Activated CD4-positive, alpha-beta memory T cell treated with anti-CD3 and anti-CD28 coated beads, Interleukin-2, amount 10 ng/mL, durations not matched to agents 7 days and 5 days (primary cell): ENCODE measurements at regions of chr1 and their contacts with region 1.

Region 1: DNA sequence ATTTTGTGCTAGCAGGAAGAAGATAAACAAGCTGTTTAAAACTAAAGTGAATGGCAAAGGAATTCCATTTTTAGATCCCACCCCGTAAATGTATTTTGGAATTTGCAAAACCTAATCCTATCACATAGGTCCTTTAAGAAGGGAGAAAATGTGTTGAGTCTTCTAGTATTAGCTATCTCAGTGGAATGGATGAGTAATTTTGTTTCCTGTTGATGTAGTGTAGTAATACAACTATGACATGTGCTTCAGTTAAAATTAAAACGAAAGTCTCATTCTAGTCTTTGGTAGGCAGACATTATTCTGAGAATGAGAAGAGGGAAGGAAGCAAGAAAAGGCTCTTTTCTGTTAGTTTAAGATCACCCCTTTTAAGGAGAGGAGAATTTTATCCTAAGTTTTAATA is 265.9 kb upstream of the C1orf105 start:
- DNase-seq: no peak
- H3K4me3 Mint-ChIP-seq: peak overlapping the region; percentile 19
- H3K27ac Mint-ChIP-seq: peak overlapping the region; percentile 71
- H3K4me1 Mint-ChIP-seq: peaks cover 8% of the 10 kb centered on the region
- H3K27me3 Mint-ChIP-seq: no peaks in the 10 kb centered on the region

Region 2: GRCh38 chr1:172125812-172126430 is 28.6 kb before region 1 on chr1:
- CTCF ChIA-PET with region 1: no interaction called
- POLR2A ChIA-PET with region 1: no interaction called
- DNase-seq: no peak
- H3K4me3 Mint-ChIP-seq: no peak overlapping the region
- H3K27ac Mint-ChIP-seq: no peak overlapping the region
- H3K4me1 Mint-ChIP-seq: no peaks in the 10 kb centered on the region
- H3K27me3 Mint-ChIP-seq: no peaks in the 10 kb centered on the region

Region 3: DNA sequence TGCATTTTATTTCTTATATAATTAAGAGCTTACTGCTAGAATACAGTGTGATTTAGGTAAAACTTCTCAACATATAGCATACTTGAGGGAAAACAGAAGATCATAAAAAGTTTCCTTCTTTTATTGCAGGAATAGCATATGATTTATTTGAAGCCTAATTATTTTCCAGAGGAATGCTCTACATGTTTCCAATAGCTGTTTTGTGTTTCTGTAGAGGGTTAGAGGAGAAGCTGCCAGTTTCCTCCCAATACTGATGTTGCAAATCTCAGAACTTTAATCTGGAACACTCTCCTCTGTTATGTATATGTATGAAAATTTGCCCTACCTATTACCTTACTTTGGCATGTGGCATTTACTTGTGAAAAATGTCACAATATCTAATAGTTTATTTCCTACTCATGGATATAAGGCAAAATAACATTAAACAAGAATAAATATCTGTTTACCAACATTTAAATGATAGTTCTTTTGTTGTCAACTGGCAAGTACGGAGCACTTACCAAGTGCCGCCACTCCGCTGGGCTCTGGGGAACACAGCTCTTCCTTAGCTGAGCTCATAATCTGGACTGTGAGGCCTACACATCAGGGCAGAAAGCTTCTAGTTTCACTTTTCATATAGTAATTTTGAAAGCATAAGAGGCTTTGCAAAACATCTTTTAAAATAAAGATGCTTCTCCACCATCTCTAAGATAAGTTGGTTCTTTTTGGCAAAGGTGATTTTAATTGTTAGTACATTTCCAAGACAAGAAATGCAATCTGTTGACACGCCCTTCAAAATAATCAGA is 26.1 kb after region 1 on chr1:
- CTCF ChIA-PET with region 1: interaction called, 7 read pairs
- POLR2A ChIA-PET with region 1: interaction called, 16 read pairs
- DNase-seq: peak; percentile 59
- H3K4me3 Mint-ChIP-seq: peak overlapping the region; percentile 70
- H3K27ac Mint-ChIP-seq: peak overlapping the region; percentile 96
- H3K4me1 Mint-ChIP-seq: peaks cover 47% of the 10 kb centered on the region
- H3K27me3 Mint-ChIP-seq: no peaks in the 10 kb centered on the region

Region 4: GRCh38 chr1:172449585-172450534 is 295.3 kb after region 1 on chr1:
- CTCF ChIA-PET with region 1: no interaction called
- POLR2A ChIA-PET with region 1: no interaction called
- DNase-seq: peak; percentile 48
- H3K4me3 Mint-ChIP-seq: no peak overlapping the region
- H3K27ac Mint-ChIP-seq: no peak overlapping the region
- H3K4me1 Mint-ChIP-seq: peaks cover 32% of the 10 kb centered on the region
- H3K27me3 Mint-ChIP-seq: peaks cover 1% of the 10 kb centered on the region